B cell (primary cell): ENCODE measurements at regions of chr17 and their contacts with region 1.

Region 1: GRCh38 chr17:74748529-74749365 is at the start of gene NHERF1:
- DNase-seq: peak; percentile 95
- ATAC-seq: peak; percentile 95
- H3K4me3 ChIP-seq: peak within 1 kb of the TSS; percentile 51 to 99 (median 90)
- H3K4me3 Mint-ChIP-seq: peak within 1 kb of the TSS; percentile 91
- H3K27ac ChIP-seq: peak within 1 kb of the TSS; percentile 45 to 80
- H3K27ac Mint-ChIP-seq: peak within 1 kb of the TSS; percentile 82
- H3K4me1 ChIP-seq: peaks cover 43 to 56% of the 10 kb centered on the region in 2 donors
- H3K4me1 Mint-ChIP-seq: peaks cover 58% of the 10 kb centered on the region
- H3K27me3 ChIP-seq: no peaks in the 10 kb centered on the region
- H3K27me3 Mint-ChIP-seq: no peaks in the 10 kb centered on the region
- CTCF ChIP-seq: no peak
- total RNA-seq, gene NHERF1: 69.5 and 81.8 TPM in 2 replicates

Region 2: GRCh38 chr17:74203439-74204240 is 545.1 kb before region 1 on chr17 and contains the start of gene RPL38:
- CTCF ChIA-PET with region 1: no interaction called
- POLR2A ChIA-PET with region 1: interaction called, 10 read pairs
- intact Hi-C with region 1: no loop called
- DNase-seq: peak; percentile 96
- ATAC-seq: peak; percentile 98
- H3K4me3 ChIP-seq: peak within 1 kb of the TSS; percentile 90 to 94 (median 91)
- H3K4me3 Mint-ChIP-seq: peak within 1 kb of the TSS; percentile 98
- H3K27ac ChIP-seq: peak within 1 kb of the TSS; percentile 70 to 85
- H3K27ac Mint-ChIP-seq: peak within 1 kb of the TSS; percentile 94
- H3K4me1 ChIP-seq: peaks cover 34 to 40% of the 10 kb centered on the region in 2 donors
- H3K4me1 Mint-ChIP-seq: peaks cover 33% of the 10 kb centered on the region
- H3K27me3 ChIP-seq: peaks cover 0 to 40% (median 8%) of the 10 kb centered on the region in 4 experiments
- H3K27me3 Mint-ChIP-seq: peaks cover 29% of the 10 kb centered on the region
- CTCF ChIP-seq: peak; percentile 84
- total RNA-seq, gene RPL38: 1,416 and 1,550 TPM in 2 replicates

Region 3: DNA sequence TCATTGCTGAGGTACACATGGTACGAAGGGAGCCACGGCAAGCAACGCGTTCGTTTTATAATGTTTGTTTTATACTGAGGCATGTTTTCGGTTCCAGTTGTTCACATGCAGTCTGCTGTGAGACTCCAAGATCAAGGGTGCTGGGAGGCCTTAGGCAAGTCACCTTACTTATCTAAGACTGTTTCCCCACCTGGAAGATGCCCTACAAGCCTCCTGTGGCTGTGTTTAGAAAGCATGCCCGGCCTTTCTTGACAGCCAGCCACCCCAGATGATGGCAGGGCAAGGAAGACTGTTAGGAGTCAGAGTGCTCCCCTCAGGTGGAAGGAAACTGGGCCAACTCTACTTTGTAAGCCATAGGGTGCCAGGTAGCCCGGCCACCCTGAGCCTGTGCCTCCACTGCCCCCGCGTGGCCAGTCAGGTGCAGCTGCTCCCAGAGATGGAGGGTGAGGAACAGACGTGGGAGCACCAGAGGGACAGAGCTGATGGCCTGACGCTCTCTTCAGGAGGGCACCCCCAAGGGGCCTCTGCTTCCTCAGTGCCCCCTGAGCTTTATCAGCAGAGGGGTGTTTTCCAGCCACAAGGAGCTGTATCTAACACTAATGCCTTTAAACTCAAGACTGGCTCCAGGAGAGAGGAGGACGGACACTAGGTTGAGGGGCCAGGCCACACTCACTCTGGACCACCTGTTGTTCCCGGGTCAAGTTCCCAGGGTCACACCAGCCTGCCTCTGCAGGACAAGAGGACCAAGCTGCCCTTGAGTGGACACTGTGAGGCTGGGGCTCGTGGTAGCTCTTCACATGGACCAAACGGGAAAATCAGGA is 22.0 kb after region 1 on chr17:
- CTCF ChIA-PET with region 1: interaction called, 57 read pairs
- POLR2A ChIA-PET with region 1: interaction called, 10 read pairs
- intact Hi-C with region 1: loop called (anchors 1 kb)
- DNase-seq: peak; percentile 78
- ATAC-seq: peak; percentile 94
- H3K4me3 ChIP-seq: no peak overlapping the region
- H3K4me3 Mint-ChIP-seq: no peak overlapping the region
- H3K27ac ChIP-seq: no peak overlapping the region
- H3K27ac Mint-ChIP-seq: peak overlapping the region; percentile 50
- H3K4me1 ChIP-seq: peaks cover 6 to 7% of the 10 kb centered on the region in 2 donors
- H3K4me1 Mint-ChIP-seq: peaks cover 17% of the 10 kb centered on the region
- H3K27me3 ChIP-seq: no peaks in the 10 kb centered on the region
- H3K27me3 Mint-ChIP-seq: no peaks in the 10 kb centered on the region
- CTCF ChIP-seq: peak; percentile 75

Region 4: DNA sequence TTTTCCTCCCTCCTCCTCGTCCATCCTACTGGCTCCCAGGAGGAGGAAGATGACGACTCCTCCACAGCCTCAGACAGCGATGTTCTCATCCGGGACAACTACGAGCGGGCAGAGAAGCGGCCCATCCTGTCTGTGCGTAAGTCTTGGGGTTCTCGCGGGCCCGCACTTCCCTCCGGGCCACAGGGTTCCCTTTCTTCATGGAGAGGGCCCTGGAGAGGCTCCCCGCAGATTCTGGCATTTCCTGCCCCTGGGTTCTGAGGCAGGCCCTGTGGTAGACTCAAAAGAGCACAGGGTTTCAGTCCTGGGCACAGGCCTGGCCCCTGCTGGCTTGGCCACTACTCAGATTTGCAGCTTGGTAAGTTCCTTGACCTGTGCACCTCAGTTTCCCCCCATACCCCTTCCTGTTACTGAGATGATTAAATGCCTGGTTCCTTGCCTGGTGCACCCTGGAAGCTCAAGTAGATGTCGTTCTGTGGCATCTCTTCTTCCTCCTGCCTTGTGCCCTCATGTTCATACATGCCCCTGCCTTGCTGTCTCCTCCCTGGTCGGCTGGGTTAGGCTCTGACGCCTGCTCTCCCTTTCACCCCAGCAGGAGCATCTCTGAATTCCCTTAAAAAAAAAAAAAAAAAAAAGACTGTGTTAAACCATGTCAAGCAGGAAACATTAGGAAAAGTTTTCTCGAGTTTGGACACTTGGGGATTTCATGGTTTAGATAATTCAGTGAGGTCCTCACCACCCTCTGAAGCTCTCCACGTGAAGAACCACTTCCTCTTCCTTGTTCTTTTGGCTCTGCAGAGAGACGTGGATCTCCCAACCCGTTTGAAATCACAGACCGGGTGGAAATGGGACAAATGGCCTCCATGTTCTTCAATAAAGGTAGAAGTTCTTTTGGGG is 41.7 kb after region 1 on chr17:
- CTCF ChIA-PET with region 1: interaction called, 29 read pairs
- POLR2A ChIA-PET with region 1: no interaction called
- intact Hi-C with region 1: no loop called
- DNase-seq: no peak
- ATAC-seq: no peak
- H3K4me3 ChIP-seq: no peak overlapping the region
- H3K4me3 Mint-ChIP-seq: no peak overlapping the region
- H3K27ac ChIP-seq: no peak overlapping the region
- H3K27ac Mint-ChIP-seq: no peak overlapping the region
- H3K4me1 ChIP-seq: peaks cover 8 to 24% of the 10 kb centered on the region in 2 donors
- H3K4me1 Mint-ChIP-seq: peaks cover 22% of the 10 kb centered on the region
- H3K27me3 ChIP-seq: no peaks in the 10 kb centered on the region
- H3K27me3 Mint-ChIP-seq: no peaks in the 10 kb centered on the region
- CTCF ChIP-seq: no peak

Region 5: DNA sequence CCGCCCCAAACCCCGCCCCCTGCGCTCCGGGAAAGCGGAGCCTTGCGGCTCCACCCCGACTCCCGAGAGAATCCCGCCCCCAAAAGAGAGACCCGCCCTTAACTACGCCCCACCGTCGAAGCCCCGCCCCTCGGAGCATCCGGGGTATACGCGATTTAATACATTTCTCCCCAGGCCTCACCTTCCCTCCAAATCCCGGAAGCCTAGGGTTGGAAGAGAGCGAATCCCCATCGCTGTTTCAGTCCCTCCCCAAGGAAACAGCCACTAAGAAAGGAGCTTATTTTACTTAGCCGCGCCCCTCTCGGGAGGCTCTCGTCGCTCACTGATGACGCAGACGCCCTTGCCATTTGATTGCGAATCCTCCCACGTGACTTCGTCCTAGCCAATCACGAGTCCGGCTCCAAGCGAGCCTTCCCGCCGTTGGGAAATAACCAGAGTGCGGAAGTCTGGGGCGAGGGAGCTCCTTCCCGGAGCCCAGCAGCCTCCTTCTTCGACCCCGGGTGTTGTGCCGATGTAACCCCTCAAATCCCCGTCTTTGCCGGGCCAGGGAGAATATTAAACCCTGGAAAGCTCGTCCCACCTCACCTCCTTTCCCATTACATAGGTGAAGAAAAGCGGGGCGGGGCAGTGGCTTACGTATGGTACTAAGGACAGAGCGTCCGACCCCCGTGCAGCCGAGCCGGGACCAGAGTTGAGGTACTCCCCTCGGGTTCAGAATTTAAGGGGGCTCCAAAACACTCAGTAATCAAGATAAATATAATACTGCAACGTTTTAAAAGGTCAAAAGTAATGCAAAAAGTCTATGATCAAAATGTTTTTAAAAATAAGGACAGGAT is 124.5 kb after region 1 on chr17:
- CTCF ChIA-PET with region 1: no interaction called
- POLR2A ChIA-PET with region 1: interaction called, 8 read pairs
- intact Hi-C with region 1: loop called (anchors 1 kb)
- DNase-seq: peak; percentile 100
- ATAC-seq: peak; percentile 93
- H3K4me3 ChIP-seq: peak overlapping the region; percentile 78 to 91 (median 86)
- H3K4me3 Mint-ChIP-seq: peak overlapping the region; percentile 81
- H3K27ac ChIP-seq: peak overlapping the region; percentile 95 to 96
- H3K27ac Mint-ChIP-seq: peak overlapping the region; percentile 94
- H3K4me1 ChIP-seq: peaks cover 12 to 15% of the 10 kb centered on the region in 2 donors
- H3K4me1 Mint-ChIP-seq: peaks cover 12% of the 10 kb centered on the region
- H3K27me3 ChIP-seq: no peaks in the 10 kb centered on the region
- H3K27me3 Mint-ChIP-seq: no peaks in the 10 kb centered on the region
- CTCF ChIP-seq: no peak